Activated CD8-positive, alpha-beta T cell treated with anti-CD3 and anti-CD28 coated beads, Interleukin-2, amount 10 ng/mL, durations not matched to agents 7 days and 5 days (primary cell): ENCODE measurements at regions of chr2 and their contacts with region 1.

Region 1: GRCh38 chr2:74250189-74250631 is 51.8 kb downstream of the MTHFD2 start:
- DNase-seq: peak; percentile 68
- ATAC-seq: peak; percentile 77
- H3K4me3 Mint-ChIP-seq: no peak overlapping the region
- H3K27ac Mint-ChIP-seq: no peak overlapping the region
- H3K4me1 Mint-ChIP-seq: peaks cover 2% of the 10 kb centered on the region
- H3K27me3 Mint-ChIP-seq: no peaks in the 10 kb centered on the region

Region 2: GRCh38 chr2:74221604-74222299 is 28.5 kb before region 1 on chr2:
- CTCF ChIA-PET with region 1: no interaction called
- POLR2A ChIA-PET with region 1: no interaction called
- DNase-seq: no peak
- ATAC-seq: peak; percentile 10
- H3K4me3 Mint-ChIP-seq: no peak overlapping the region
- H3K27ac Mint-ChIP-seq: peak overlapping the region; percentile 26
- H3K4me1 Mint-ChIP-seq: peaks cover 3% of the 10 kb centered on the region
- H3K27me3 Mint-ChIP-seq: no peaks in the 10 kb centered on the region

Region 3: DNA sequence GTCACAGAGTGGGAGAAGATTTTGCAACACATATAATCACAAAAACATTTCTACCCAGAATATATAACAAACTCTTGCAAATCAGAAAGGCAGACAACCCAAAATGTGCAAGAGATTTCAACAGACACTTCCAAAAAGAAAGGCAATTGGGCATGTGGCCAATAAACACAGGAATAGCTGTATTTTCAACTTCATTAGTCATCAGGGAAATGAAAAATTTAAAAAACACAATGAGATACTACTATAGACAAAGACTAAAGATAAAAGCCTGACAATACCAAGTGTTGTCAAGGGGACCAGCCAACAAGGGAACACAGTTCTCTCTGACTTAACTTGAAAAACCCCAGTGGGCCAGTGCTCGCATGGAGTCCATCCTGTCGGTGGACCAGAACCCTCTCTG is 11.3 kb before region 1 on chr2:
- CTCF ChIA-PET with region 1: interaction called, 20 read pairs
- POLR2A ChIA-PET with region 1: no interaction called
- DNase-seq: no peak
- ATAC-seq: no peak
- H3K4me3 Mint-ChIP-seq: no peak overlapping the region
- H3K27ac Mint-ChIP-seq: no peak overlapping the region
- H3K4me1 Mint-ChIP-seq: peaks cover 2% of the 10 kb centered on the region
- H3K27me3 Mint-ChIP-seq: no peaks in the 10 kb centered on the region

Region 4: DNA sequence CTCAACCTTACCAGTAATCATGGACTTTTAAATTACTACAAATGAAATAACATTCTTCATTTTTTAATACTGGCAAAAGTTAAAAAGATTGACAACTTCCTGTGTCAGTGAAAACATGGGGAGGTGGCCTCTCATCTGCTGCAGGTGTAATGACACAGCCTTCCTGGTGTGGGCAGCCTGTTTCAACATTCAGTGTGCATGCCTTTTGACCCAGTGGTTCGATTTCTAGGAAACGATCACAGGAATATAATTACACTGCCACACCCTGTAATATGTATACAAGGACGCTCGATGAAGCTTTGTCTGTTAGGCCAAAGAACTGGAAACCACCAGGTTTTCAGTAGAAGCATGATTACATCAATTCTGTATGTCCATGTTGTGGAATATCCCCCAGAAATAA is 16.9 kb after region 1 on chr2:
- CTCF ChIA-PET with region 1: interaction called, 12 read pairs
- POLR2A ChIA-PET with region 1: no interaction called
- DNase-seq: peak; percentile 86
- ATAC-seq: peak; percentile 98
- H3K4me3 Mint-ChIP-seq: peak overlapping the region; percentile 53
- H3K27ac Mint-ChIP-seq: peak overlapping the region; percentile 86
- H3K4me1 Mint-ChIP-seq: peaks cover 23% of the 10 kb centered on the region
- H3K27me3 Mint-ChIP-seq: no peaks in the 10 kb centered on the region

Region 5: DNA sequence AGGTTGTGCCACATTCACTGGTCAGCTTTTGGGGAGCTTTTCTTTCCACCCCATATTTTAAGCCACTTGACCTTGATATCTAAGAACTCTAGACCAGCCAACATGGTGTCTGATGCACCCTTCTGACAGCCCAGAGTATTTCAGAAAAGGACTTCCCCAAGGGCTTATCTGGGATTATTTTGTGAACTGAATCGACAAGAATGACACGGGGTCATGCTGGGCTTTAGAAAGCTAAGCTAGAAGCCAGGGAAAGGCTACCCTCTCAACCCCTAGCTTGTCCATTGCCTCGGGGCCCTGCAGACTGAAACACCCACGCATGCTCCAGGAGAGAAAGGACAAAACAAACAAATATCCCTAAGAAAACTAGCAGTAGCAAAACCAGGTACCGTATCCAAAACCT is 77.0 kb after region 1 on chr2:
- CTCF ChIA-PET with region 1: interaction called, 121 read pairs
- POLR2A ChIA-PET with region 1: no interaction called
- DNase-seq: no peak
- ATAC-seq: no peak
- H3K4me3 Mint-ChIP-seq: no peak overlapping the region
- H3K27ac Mint-ChIP-seq: no peak overlapping the region
- H3K4me1 Mint-ChIP-seq: peaks cover 14% of the 10 kb centered on the region
- H3K27me3 Mint-ChIP-seq: peaks cover 3% of the 10 kb centered on the region

Region 6: DNA sequence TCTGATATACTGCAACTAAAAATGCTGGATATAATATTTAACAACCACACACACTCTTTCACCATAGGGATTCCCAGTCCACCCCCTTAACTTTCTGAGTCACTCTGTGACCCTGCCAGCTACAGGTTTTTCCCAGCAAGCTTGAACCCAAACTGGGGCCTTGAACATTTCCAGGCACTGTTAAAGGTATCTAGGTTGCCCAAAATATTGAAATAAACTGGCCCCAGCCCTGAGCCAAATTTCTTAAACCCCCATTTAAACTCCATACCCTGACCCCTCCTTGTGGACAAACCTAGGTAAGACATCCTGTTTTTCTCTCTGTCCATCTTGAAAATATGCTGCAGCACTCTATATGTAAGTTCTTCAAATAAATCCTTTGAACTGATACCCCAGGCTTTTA is 149.6 kb after region 1 on chr2:
- CTCF ChIA-PET with region 1: interaction called, 22 read pairs
- POLR2A ChIA-PET with region 1: no interaction called
- DNase-seq: peak; percentile 51
- ATAC-seq: peak; percentile 80
- H3K4me3 Mint-ChIP-seq: no peak overlapping the region
- H3K27ac Mint-ChIP-seq: no peak overlapping the region
- H3K4me1 Mint-ChIP-seq: peaks cover 5% of the 10 kb centered on the region
- H3K27me3 Mint-ChIP-seq: peaks cover 9% of the 10 kb centered on the region